ENCODE measurements at regions of chr14 and their contacts with region 1.

Region 1: DNA sequence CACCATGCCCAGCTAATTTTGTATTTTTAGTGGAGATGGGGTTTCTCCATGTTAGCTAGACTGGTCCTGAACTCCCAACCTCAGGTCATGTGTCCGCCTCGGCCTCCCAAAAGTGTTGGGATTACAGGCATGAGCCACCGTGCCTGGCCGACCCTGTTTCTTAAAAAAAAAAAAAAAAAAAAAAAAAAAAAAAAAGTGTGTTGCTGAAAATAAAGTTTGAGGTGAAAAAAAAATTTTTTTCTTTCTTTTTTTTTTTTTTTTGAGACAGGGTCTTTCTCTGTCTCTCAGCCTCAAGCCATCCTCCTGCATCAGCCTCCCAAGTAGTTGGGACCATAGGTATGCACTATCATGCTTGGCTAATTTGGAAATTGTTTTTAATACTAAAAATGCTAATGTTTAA is 11.3 kb downstream of the RBM25 start:
- DNase-seq: no peak
- H3K4me3 ChIP-seq: no peak overlapping the region
- H3K27ac ChIP-seq: no peak overlapping the region
- H3K4me1 ChIP-seq: no peaks in the 10 kb centered on the region
- H3K27me3 ChIP-seq: no peaks in the 10 kb centered on the region
- CTCF ChIP-seq: no peak
- POLR2A ChIP-seq: no peak

Region 2: DNA sequence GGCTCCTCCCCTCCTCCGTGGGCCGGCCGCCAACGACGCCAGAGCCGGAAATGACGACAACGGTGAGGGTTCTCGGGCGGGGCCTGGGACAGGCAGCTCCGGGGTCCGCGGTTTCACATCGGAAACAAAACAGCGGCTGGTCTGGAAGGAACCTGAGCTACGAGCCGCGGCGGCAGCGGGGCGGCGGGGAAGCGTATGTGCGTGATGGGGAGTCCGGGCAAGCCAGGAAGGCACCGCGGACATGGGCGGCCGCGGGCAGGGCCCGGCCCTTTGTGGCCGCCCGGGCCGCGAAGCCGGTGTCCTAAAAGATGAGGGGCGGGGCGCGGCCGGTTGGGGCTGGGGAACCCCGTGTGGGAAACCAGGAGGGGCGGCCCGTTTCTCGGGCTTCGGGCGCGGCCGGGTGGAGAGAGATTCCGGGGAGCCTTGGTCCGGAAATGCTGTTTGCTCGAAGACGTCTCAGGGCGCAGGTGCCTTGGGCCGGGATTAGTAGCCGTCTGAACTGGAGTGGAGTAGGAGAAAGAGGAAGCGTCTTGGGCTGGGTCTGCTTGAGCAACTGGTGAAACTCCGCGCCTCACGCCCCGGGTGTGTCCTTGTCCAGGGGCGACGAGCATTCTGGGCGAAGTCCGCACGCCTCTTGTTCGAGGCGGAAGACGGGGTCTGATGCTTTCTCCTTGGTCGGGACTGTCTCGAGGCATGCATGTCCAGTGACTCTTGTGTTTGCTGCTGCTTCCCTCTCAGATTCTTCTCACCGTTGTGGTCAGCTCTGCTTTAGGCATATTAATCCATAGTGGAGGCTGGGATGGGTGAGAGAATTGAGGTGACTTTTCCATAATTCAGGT is 67.0 kb after region 1 on chr14 and contains the start of gene PSEN1:
- CTCF ChIA-PET with region 1: no interaction called
- POLR2A ChIA-PET with region 1: interaction called, 12 read pairs
- dilution Hi-C with region 1: no loop called
- intact Hi-C with region 1: no loop called
- DNase-seq: peak; percentile 94
- H3K4me3 ChIP-seq: peak within 1 kb of the TSS; percentile 12 to 82 (median 69)
- H3K27ac ChIP-seq: peak within 1 kb of the TSS; percentile 81
- H3K4me1 ChIP-seq: peaks cover 9% of the 10 kb centered on the region
- H3K27me3 ChIP-seq: no peaks in the 10 kb centered on the region
- CTCF ChIP-seq: no peak
- POLR2A ChIP-seq: peak; percentile 76
- total RNA-seq, gene PSEN1: 36.8 and 40.2 TPM in 2 replicates